CD4-positive, alpha-beta memory T cell (primary cell): ENCODE measurements at regions of chr7 and their contacts with region 1.

Region 1: DNA sequence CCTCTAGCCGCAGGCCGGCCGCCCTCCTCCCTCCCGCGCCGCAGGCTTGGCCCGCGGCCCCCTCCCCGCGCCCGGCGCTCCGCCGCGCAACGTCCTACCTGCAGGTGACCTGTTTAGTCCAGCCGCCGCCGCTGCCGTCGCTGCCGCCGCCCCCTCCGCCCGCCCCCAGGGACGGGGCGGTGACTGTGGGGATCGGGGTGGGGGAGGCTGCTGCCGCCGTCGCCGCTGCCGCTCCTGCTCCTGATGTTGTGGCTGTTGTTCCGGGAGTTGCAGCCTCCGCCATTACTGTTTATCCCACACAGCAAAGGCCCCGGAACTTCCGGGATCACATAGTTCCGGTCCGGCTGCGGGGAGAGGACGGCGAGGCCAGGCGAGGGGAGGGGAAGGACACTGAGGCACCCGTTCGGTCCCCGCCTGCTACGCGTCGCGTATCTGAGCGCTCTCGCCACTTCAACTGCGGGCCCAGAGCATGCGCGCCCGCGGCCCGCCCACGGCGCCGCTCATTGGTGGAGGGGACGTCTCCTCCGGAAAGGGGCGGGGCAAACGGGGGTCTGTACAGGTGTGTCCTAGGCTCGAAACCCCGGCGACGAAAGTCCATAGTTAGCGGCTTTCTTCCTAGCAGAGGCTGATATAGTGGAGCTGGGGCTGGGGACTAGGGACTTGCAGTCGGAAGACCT is at the start of gene MKRN1:
- DNase-seq: peak; percentile 90 to 93 (median 90)
- H3K4me3 ChIP-seq: peak within 1 kb of the TSS; percentile 59 to 71
- H3K4me3 Mint-ChIP-seq: peak within 1 kb of the TSS; percentile 95 to 100 (median 99)
- H3K27ac ChIP-seq: peak within 1 kb of the TSS; percentile 75
- H3K27ac Mint-ChIP-seq: peak within 1 kb of the TSS; percentile 95 to 99 (median 98)
- H3K4me1 ChIP-seq: peaks cover 25% of the 10 kb centered on the region
- H3K4me1 Mint-ChIP-seq: peaks cover 16 to 40% (median 25%) of the 10 kb centered on the region in 4 donors
- H3K27me3 ChIP-seq: no peaks in the 10 kb centered on the region
- H3K27me3 Mint-ChIP-seq: no peaks in the 10 kb centered on the region
- total RNA-seq, gene MKRN1: 140 to 156 TPM

Region 2: GRCh38 chr7:139340037-139340807 is 1139.0 kb before region 1 on chr7:
- CTCF ChIA-PET with region 1: no interaction called
- POLR2A ChIA-PET with region 1: no interaction called
- intact Hi-C with region 1: loop called (anchors 5 kb)
- DNase-seq: peak; percentile 97 to 100 (median 98)
- H3K4me3 ChIP-seq: peak overlapping the region; percentile 95 to 96
- H3K4me3 Mint-ChIP-seq: peak overlapping the region; percentile 95 to 99 (median 98)
- H3K27ac ChIP-seq: peak overlapping the region; percentile 100
- H3K27ac Mint-ChIP-seq: peak overlapping the region; percentile 100
- H3K4me1 ChIP-seq: peaks cover 20% of the 10 kb centered on the region
- H3K4me1 Mint-ChIP-seq: peaks cover 17 to 45% (median 27%) of the 10 kb centered on the region in 4 donors
- H3K27me3 ChIP-seq: no peaks in the 10 kb centered on the region
- H3K27me3 Mint-ChIP-seq: peaks cover 3 to 6% of the 10 kb centered on the region in 2 donors

Region 3: GRCh38 chr7:140062528-140063299 is 416.5 kb before region 1 on chr7 and contains the start of gene PARP12:
- CTCF ChIA-PET with region 1: no interaction called
- POLR2A ChIA-PET with region 1: no interaction called
- intact Hi-C with region 1: loop called (anchors 5 kb)
- DNase-seq: peak; percentile 84 to 89 (median 86)
- H3K4me3 ChIP-seq: peak within 1 kb of the TSS; percentile 54 to 89
- H3K4me3 Mint-ChIP-seq: peak within 1 kb of the TSS; percentile 92 to 96 (median 95)
- H3K27ac ChIP-seq: peak within 1 kb of the TSS; percentile 84
- H3K27ac Mint-ChIP-seq: peak within 1 kb of the TSS; percentile 86 to 99 (median 91)
- H3K4me1 ChIP-seq: peaks cover 45% of the 10 kb centered on the region
- H3K4me1 Mint-ChIP-seq: peaks cover 31 to 56% (median 43%) of the 10 kb centered on the region in 4 donors
- H3K27me3 ChIP-seq: no peaks in the 10 kb centered on the region
- H3K27me3 Mint-ChIP-seq: no peaks in the 10 kb centered on the region
- total RNA-seq, gene PARP12: 91.8 to 96.6 TPM

Region 4: GRCh38 chr7:140403878-140404564 is 75.2 kb before region 1 on chr7 and contains the start of gene RAB19:
- CTCF ChIA-PET with region 1: interaction called, 3 read pairs
- POLR2A ChIA-PET with region 1: interaction called, 3 read pairs
- intact Hi-C with region 1: loop called (anchors 2 kb)
- DNase-seq: peak; percentile 42 to 52 (median 50)
- H3K4me3 ChIP-seq: peak within 1 kb of the TSS; percentile 74 to 92
- H3K4me3 Mint-ChIP-seq: peak within 1 kb of the TSS; percentile 94 to 99 (median 98)
- H3K27ac ChIP-seq: peak within 1 kb of the TSS; percentile 63
- H3K27ac Mint-ChIP-seq: peak within 1 kb of the TSS; percentile 89 to 99 (median 96)
- H3K4me1 ChIP-seq: peaks cover 8% of the 10 kb centered on the region
- H3K4me1 Mint-ChIP-seq: peaks cover 13 to 22% (median 18%) of the 10 kb centered on the region in 4 donors
- H3K27me3 ChIP-seq: no peaks in the 10 kb centered on the region
- H3K27me3 Mint-ChIP-seq: no peaks in the 10 kb centered on the region
- total RNA-seq, gene RAB19: 2.5 to 3.2 TPM

Region 5: GRCh38 chr7:140653319-140654108 is 174.3 kb after region 1 on chr7:
- CTCF ChIA-PET with region 1: interaction called, 30 read pairs
- POLR2A ChIA-PET with region 1: no interaction called
- intact Hi-C with region 1: loop called (anchors 1 kb)
- DNase-seq: peak in 4 of 5 donors; percentile 40 to 57 (median 45)
- H3K4me3 ChIP-seq: no peak overlapping the region
- H3K4me3 Mint-ChIP-seq: peak overlapping the region in 2 of 8 donors; percentile 24 to 39
- H3K27ac ChIP-seq: no peak overlapping the region
- H3K27ac Mint-ChIP-seq: no peak overlapping the region
- H3K4me1 ChIP-seq: peaks cover 17% of the 10 kb centered on the region
- H3K4me1 Mint-ChIP-seq: peaks cover 18 to 24% (median 20%) of the 10 kb centered on the region in 4 donors
- H3K27me3 ChIP-seq: no peaks in the 10 kb centered on the region
- H3K27me3 Mint-ChIP-seq: peaks cover 3 to 12% of the 10 kb centered on the region in 2 donors

Region 6: GRCh38 chr7:140696680-140697446 is 217.7 kb after region 1 on chr7 and contains the start of gene NDUFB2:
- CTCF ChIA-PET with region 1: no interaction called
- POLR2A ChIA-PET with region 1: no interaction called
- intact Hi-C with region 1: loop called (anchors 1 kb)
- DNase-seq: peak; percentile 84 to 90 (median 90)
- H3K4me3 ChIP-seq: peak within 1 kb of the TSS; percentile 66 to 92
- H3K4me3 Mint-ChIP-seq: peak within 1 kb of the TSS; percentile 93 to 98 (median 97)
- H3K27ac ChIP-seq: peak within 1 kb of the TSS; percentile 89
- H3K27ac Mint-ChIP-seq: peak within 1 kb of the TSS; percentile 96 to 100 (median 98)
- H3K4me1 ChIP-seq: peaks cover 32% of the 10 kb centered on the region
- H3K4me1 Mint-ChIP-seq: peaks cover 18 to 48% (median 33%) of the 10 kb centered on the region in 4 donors
- H3K27me3 ChIP-seq: no peaks in the 10 kb centered on the region
- H3K27me3 Mint-ChIP-seq: no peaks in the 10 kb centered on the region
- total RNA-seq, gene NDUFB2: 94.4 to 98.6 TPM

Region 7: GRCh38 chr7:140924019-140924820 is 445.0 kb after region 1 on chr7:
- CTCF ChIA-PET with region 1: no interaction called
- POLR2A ChIA-PET with region 1: no interaction called
- intact Hi-C with region 1: loop called (anchors 10 kb)
- DNase-seq: peak; percentile 79 to 92 (median 83)
- H3K4me3 ChIP-seq: peak overlapping the region; percentile 68 to 90
- H3K4me3 Mint-ChIP-seq: no peak overlapping the region
- H3K27ac ChIP-seq: peak overlapping the region; percentile 95
- H3K27ac Mint-ChIP-seq: no peak overlapping the region
- H3K4me1 ChIP-seq: peaks cover 28% of the 10 kb centered on the region
- H3K4me1 Mint-ChIP-seq: peaks cover 11 to 29% (median 18%) of the 10 kb centered on the region in 4 donors
- H3K27me3 ChIP-seq: no peaks in the 10 kb centered on the region
- H3K27me3 Mint-ChIP-seq: peaks cover 0 to 4% of the 10 kb centered on the region in 2 donors